CD8-positive, alpha-beta T cell (primary cell): ENCODE measurements at regions of chr10 and their contacts with region 1.

Region 1: GRCh38 chr10:77641788-77642397 is 4.3 kb upstream of the KCNMA1 start:
- DNase-seq: peak in 8 of 9 experiments; percentile 23 to 72 (median 64)
- ATAC-seq: no peak
- H3K4me3 ChIP-seq: no peak overlapping the region
- H3K4me3 Mint-ChIP-seq: no peak overlapping the region
- H3K27ac ChIP-seq: no peak overlapping the region
- H3K27ac Mint-ChIP-seq: no peak overlapping the region
- H3K4me1 ChIP-seq: no peaks in the 10 kb centered on the region
- H3K4me1 Mint-ChIP-seq: peaks cover 11% of the 10 kb centered on the region
- H3K27me3 ChIP-seq: peaks cover 2 to 3% of the 10 kb centered on the region in 2 experiments
- H3K27me3 Mint-ChIP-seq: peaks cover 34% of the 10 kb centered on the region
- CTCF ChIP-seq: peak; percentile 85

Region 2: GRCh38 chr10:76723844-76724243 is 918.0 kb before region 1 on chr10:
- CTCF ChIA-PET with region 1: no interaction called
- POLR2A ChIA-PET with region 1: no interaction called
- intact Hi-C with region 1: no loop called
- DNase-seq: no peak
- ATAC-seq: no peak
- H3K4me3 ChIP-seq: no peak overlapping the region
- H3K4me3 Mint-ChIP-seq: no peak overlapping the region
- H3K27ac ChIP-seq: no peak overlapping the region
- H3K27ac Mint-ChIP-seq: no peak overlapping the region
- H3K4me1 ChIP-seq: no peaks in the 10 kb centered on the region
- H3K4me1 Mint-ChIP-seq: no peaks in the 10 kb centered on the region
- H3K27me3 ChIP-seq: no peaks in the 10 kb centered on the region
- H3K27me3 Mint-ChIP-seq: no peaks in the 10 kb centered on the region
- CTCF ChIP-seq: no peak

Region 3: GRCh38 chr10:77165445-77166208 is 476.3 kb before region 1 on chr10:
- CTCF ChIA-PET with region 1: interaction called, 394 read pairs
- POLR2A ChIA-PET with region 1: no interaction called
- intact Hi-C with region 1: loop called in 1 of 2 experiments (anchors 2 kb)
- DNase-seq: peak in 6 of 9 experiments; percentile 11 to 62 (median 39)
- ATAC-seq: peak; percentile 46
- H3K4me3 ChIP-seq: no peak overlapping the region
- H3K4me3 Mint-ChIP-seq: peak overlapping the region; percentile 52
- H3K27ac ChIP-seq: no peak overlapping the region
- H3K27ac Mint-ChIP-seq: no peak overlapping the region
- H3K4me1 ChIP-seq: no peaks in the 10 kb centered on the region
- H3K4me1 Mint-ChIP-seq: no peaks in the 10 kb centered on the region
- H3K27me3 ChIP-seq: peaks cover 2 to 3% of the 10 kb centered on the region in 2 experiments
- H3K27me3 Mint-ChIP-seq: peaks cover 18% of the 10 kb centered on the region
- CTCF ChIP-seq: peak; percentile 77

Region 4: DNA sequence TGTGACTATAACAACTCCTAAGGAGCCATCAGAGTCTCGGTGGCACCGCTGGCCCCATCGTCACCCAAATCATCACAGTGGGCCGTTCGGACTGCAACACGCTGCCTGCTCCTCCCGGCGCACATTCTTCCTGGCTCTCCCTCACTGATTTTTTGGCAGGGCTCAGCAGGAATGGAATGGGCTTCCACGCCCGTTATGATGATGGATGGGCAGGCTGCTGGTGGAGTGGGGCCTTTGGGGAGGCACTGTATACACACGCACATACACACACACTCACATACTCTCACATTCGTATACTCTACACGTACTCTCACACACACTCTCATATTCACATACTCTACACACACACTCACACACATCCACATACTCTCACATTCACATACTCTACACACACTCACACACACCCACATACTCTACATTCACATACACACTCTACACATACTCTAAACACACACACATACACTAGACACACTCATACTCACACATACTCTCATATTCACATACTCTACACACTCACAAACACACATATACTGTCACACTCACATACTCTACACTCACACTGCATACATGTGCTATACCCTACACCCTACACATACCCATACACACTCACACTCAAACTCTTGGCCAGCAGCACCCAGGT is 104.1 kb before region 1 on chr10:
- CTCF ChIA-PET with region 1: no interaction called
- POLR2A ChIA-PET with region 1: no interaction called
- intact Hi-C with region 1: no loop called
- DNase-seq: no peak
- ATAC-seq: no peak
- H3K4me3 ChIP-seq: no peak overlapping the region
- H3K4me3 Mint-ChIP-seq: no peak overlapping the region
- H3K27ac ChIP-seq: no peak overlapping the region
- H3K27ac Mint-ChIP-seq: no peak overlapping the region
- H3K4me1 ChIP-seq: no peaks in the 10 kb centered on the region
- H3K4me1 Mint-ChIP-seq: no peaks in the 10 kb centered on the region
- H3K27me3 ChIP-seq: no peaks in the 10 kb centered on the region
- H3K27me3 Mint-ChIP-seq: peaks cover 3% of the 10 kb centered on the region
- CTCF ChIP-seq: no peak

Region 5: GRCh38 chr10:77628906-77629730 is 12.8 kb before region 1 on chr10:
- CTCF ChIA-PET with region 1: interaction called, 45 read pairs
- POLR2A ChIA-PET with region 1: interaction called, 3 read pairs
- intact Hi-C with region 1: no loop called
- DNase-seq: no peak
- ATAC-seq: no peak
- H3K4me3 ChIP-seq: no peak overlapping the region
- H3K4me3 Mint-ChIP-seq: no peak overlapping the region
- H3K27ac ChIP-seq: no peak overlapping the region
- H3K27ac Mint-ChIP-seq: no peak overlapping the region
- H3K4me1 ChIP-seq: no peaks in the 10 kb centered on the region
- H3K4me1 Mint-ChIP-seq: no peaks in the 10 kb centered on the region
- H3K27me3 ChIP-seq: no peaks in the 10 kb centered on the region
- H3K27me3 Mint-ChIP-seq: peaks cover 21% of the 10 kb centered on the region
- CTCF ChIP-seq: no peak